Activated CD4-positive, alpha-beta T cell treated with anti-CD3 and anti-CD28 coated beads, Interleukin-2, amount 10 ng/mL, durations not matched to agents 7 days and 5 days (primary cell): ENCODE measurements at regions of chr2 and their contacts with region 1.

Region 1: GRCh38 chr2:190695739-190696138 is 46.9 kb downstream of the NAB1 start:
- DNase-seq: no peak
- H3K4me3 Mint-ChIP-seq: no peak overlapping the region
- H3K27ac Mint-ChIP-seq: no peak overlapping the region
- H3K4me1 Mint-ChIP-seq: peaks cover 10% of the 10 kb centered on the region
- H3K27me3 Mint-ChIP-seq: no peaks in the 10 kb centered on the region

Region 2: GRCh38 chr2:190679813-190680591 is 15.7 kb before region 1 on chr2:
- CTCF ChIA-PET with region 1: interaction called, 19 read pairs
- POLR2A ChIA-PET with region 1: no interaction called
- DNase-seq: peak; percentile 50
- H3K4me3 Mint-ChIP-seq: no peak overlapping the region
- H3K27ac Mint-ChIP-seq: no peak overlapping the region
- H3K4me1 Mint-ChIP-seq: peaks cover 34% of the 10 kb centered on the region
- H3K27me3 Mint-ChIP-seq: no peaks in the 10 kb centered on the region

Region 3: DNA sequence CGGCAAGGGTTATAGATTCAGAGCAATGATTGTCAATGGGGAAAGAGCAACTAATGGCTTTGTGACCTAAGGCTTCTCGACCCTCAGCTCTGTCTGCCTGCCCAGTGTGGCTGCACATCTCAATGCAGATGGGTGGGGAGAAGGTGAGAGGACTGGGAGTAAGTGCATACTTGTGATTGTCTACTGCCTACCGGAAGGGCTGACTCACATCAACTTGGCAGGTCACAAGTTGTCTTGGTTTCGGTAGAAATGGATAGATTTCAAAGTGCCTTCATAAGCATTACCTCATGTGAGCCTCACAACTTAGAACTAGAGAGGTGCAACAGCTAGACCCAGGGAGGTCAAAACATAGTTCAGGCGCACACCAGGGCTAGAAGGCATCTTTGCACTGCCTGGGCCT is 288.9 kb after region 1 on chr2:
- CTCF ChIA-PET with region 1: no interaction called
- POLR2A ChIA-PET with region 1: no interaction called
- DNase-seq: no peak
- H3K4me3 Mint-ChIP-seq: no peak overlapping the region
- H3K27ac Mint-ChIP-seq: peak overlapping the region; percentile 55
- H3K4me1 Mint-ChIP-seq: peaks cover 88% of the 10 kb centered on the region
- H3K27me3 Mint-ChIP-seq: no peaks in the 10 kb centered on the region